Right ventricle myocardium superior (tissue), 1 donor: ENCODE measurements at regions of chr10 and their contacts with region 1.

Region 1: GRCh38 chr10:25016376-25017154 is at the start of gene THNSL1:
- DNase-seq: peak; percentile 99
- ATAC-seq: peak; percentile 99
- total RNA-seq, gene THNSL1: 6.8 TPM

Region 2: DNA sequence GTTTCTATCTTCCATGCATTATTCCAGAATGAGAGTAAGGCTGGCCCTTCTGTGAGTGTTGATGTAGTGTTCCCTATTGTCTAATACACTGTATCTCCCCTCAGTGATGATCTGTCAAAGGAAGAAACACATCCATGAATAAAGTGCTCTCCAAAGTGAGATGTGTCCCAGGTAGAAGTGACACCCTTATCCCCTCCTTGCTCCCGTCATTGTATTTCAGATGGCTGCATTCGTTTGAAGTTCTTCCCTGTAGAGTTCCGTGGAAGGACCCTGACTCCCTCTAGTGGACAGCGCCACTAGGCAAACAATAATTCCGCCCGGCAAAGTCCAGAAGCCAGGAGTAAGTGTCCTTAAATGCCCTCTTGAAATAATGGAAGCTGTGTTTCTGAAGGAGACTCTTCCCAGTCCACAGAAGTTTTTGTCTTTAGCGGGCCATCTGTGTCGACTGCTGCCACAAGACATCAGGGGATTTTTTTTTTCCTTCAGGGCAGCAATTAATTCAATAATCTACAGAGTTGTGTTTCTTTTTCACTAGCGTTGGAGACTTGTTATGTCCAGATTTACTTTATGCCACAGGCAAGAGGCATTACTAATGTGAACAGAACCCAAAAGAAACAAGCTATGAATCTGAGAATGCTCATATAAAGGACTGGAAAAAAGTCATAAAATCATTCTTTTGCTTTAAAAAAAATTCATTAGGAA is 64.5 kb after region 1 on chr10:
- intact Hi-C with region 1: loop called (anchors 5 kb)
- DNase-seq: peak; percentile 75
- ATAC-seq: peak; percentile 96